Activated CD4-positive, alpha-beta T cell treated with anti-CD3 and anti-CD28 coated beads for 36 hours (primary cell): ENCODE measurements at regions of chr1 and their contacts with region 1.

Region 1: GRCh38 chr1:54052934-54053744 is at the starts of genes TCEANC2 and TMEM59:
- DNase-seq: peak; percentile 98
- ATAC-seq: peak; percentile 96
- H3K4me3 Mint-ChIP-seq: no peak within 1 kb of the TSS
- H3K27ac Mint-ChIP-seq: no peak within 1 kb of the TSS
- H3K4me1 Mint-ChIP-seq: peaks cover 33% of the 10 kb centered on the region
- H3K27me3 Mint-ChIP-seq: no peaks in the 10 kb centered on the region
- total RNA-seq, gene TCEANC2: 14.0 to 14.2 TPM
- total RNA-seq, gene TMEM59: 99.3 to 120 TPM

Region 2: GRCh38 chr1:53196485-53197270 is 856.5 kb before region 1 on chr1 and contains the start of gene CPT2:
- CTCF ChIA-PET with region 1: no interaction called
- POLR2A ChIA-PET with region 1: no interaction called
- intact Hi-C with region 1: loop called in 1 of 2 experiments (anchors 1 kb)
- DNase-seq: peak; percentile 96
- ATAC-seq: peak; percentile 98
- H3K4me3 Mint-ChIP-seq: peak within 1 kb of the TSS; percentile 98
- H3K27ac Mint-ChIP-seq: peak within 1 kb of the TSS; percentile 99
- H3K4me1 Mint-ChIP-seq: peaks cover 25% of the 10 kb centered on the region
- H3K27me3 Mint-ChIP-seq: no peaks in the 10 kb centered on the region
- total RNA-seq, gene CPT2: 20.7 to 23.7 TPM

Region 3: GRCh38 chr1:53889304-53890298 is 163.5 kb before region 1 on chr1 and contains the start of gene YIPF1:
- CTCF ChIA-PET with region 1: no interaction called
- POLR2A ChIA-PET with region 1: interaction called, 3 read pairs
- intact Hi-C with region 1: loop called (anchors 1 to 2 kb)
- DNase-seq: peak; percentile 93
- ATAC-seq: peak; percentile 90
- H3K4me3 Mint-ChIP-seq: peak within 1 kb of the TSS; percentile 96
- H3K27ac Mint-ChIP-seq: peak within 1 kb of the TSS; percentile 94
- H3K4me1 Mint-ChIP-seq: peaks cover 38% of the 10 kb centered on the region
- H3K27me3 Mint-ChIP-seq: no peaks in the 10 kb centered on the region
- total RNA-seq, gene YIPF1: 19.0 to 24.4 TPM

Region 4: DNA sequence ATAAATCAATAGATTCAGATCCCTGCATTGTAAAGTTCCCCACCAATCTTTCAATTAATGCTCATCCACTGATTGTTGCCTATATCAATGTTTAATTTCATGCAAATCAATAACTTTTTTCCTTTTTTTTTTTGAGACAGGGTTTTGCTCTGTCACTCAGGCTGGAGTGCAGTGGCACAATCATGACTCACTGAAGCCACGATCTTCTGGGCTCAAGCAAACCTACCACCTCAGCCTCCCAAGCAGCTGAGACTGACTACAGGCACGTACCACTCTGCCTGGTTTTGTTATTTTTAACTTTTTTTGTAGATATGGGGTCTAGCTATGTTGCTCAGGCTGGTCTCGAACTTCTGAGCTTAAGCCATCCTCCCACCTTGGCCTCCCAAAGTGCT is 133.5 kb before region 1 on chr1:
- CTCF ChIA-PET with region 1: no interaction called
- POLR2A ChIA-PET with region 1: no interaction called
- intact Hi-C with region 1: no loop called
- DNase-seq: peak; percentile 59
- ATAC-seq: peak; percentile 90
- H3K4me3 Mint-ChIP-seq: no peak overlapping the region
- H3K27ac Mint-ChIP-seq: peak overlapping the region; percentile 85
- H3K4me1 Mint-ChIP-seq: peaks cover 28% of the 10 kb centered on the region
- H3K27me3 Mint-ChIP-seq: no peaks in the 10 kb centered on the region

Region 5: DNA sequence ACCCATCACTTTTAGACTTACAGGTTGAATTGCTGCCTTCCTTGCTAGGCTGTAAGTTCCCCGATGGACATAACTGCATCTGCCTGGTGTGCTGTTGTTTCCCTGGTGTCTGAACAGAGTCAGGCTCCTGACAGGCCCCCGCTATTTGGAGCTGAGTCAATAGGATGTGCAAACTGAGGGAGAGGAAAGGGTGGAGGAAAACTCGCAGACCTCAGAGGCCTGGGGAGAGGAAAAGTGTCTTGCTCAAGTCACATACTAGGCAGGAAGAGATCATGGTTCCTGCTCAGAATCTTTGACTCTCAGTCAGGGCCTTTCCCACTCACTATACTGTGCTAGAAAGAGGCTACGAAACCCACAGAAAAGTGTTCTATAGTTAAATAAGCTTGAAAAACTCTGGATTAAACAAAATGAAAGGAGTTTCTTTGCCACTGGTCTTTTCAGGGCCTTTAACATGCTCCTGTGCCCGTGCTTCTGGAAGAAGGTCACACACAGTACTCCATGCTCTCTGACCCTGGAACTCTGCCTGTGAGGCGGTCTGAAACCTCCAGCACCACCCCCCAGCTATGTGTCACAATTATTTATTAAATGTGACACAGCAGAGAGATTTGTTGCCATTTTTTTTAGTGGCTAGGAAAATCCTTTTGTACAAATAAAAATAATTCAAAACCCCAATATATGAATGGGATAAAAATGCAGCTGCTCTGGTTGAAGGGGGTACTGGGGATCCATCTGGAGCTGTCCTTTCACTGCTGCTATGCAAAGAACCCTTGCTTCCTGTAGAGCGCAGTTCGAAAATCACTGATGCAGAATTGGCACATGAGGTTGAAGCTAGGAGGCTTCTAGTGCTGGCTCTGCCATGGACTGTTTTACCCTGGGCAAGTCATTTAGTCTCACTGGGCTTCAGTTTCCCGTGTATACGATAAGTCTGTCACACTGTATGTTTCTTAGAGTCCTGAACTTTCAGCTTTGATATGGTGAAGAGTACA is 119.8 kb after region 1 on chr1:
- CTCF ChIA-PET with region 1: no interaction called
- POLR2A ChIA-PET with region 1: no interaction called
- intact Hi-C with region 1: no loop called
- DNase-seq: no peak
- ATAC-seq: no peak
- H3K4me3 Mint-ChIP-seq: no peak overlapping the region
- H3K27ac Mint-ChIP-seq: no peak overlapping the region
- H3K4me1 Mint-ChIP-seq: peaks cover 9% of the 10 kb centered on the region
- H3K27me3 Mint-ChIP-seq: no peaks in the 10 kb centered on the region

Region 6: DNA sequence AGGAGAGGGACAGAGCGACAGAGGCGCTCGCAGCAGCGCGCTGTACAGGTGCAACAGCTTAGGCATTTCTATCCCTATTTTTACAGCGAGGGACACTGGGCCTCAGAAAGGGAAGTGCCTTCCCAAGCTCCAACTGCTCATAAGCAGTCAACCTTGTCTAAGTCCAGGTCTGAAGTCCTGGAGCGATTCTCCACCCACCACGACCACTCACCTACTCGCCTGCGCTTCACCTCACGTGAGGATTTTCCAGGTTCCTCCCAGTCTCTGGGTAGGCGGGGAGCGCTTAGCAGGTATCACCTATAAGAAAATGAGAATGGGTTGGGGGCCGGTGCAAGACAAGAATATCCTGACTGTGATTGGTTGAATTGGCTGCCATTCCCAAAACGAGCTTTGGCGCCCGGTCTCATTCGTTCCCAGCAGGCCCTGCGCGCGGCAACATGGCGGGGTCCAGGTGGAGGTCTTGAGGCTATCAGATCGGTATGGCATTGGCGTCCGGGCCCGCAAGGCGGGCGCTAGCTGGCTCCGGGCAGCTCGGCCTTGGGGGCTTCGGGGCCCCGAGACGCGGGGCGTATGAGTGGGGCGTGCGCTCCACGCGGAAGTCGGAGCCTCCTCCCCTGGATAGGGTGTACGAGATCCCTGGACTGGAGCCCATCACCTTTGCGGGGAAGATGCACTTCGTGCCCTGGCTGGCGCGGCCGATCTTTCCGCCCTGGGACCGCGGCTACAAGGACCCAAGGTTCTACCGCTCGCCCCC is 146.8 kb after region 1 on chr1 and contains the starts of genes CYB5RL and MRPL37:
- CTCF ChIA-PET with region 1: no interaction called
- POLR2A ChIA-PET with region 1: no interaction called
- intact Hi-C with region 1: loop called (anchors 1 kb)
- DNase-seq: peak; percentile 94
- ATAC-seq: peak; percentile 99
- H3K4me3 Mint-ChIP-seq: peak within 1 kb of the TSS; percentile 83
- H3K27ac Mint-ChIP-seq: peak within 1 kb of the TSS; percentile 84
- H3K4me1 Mint-ChIP-seq: peaks cover 30% of the 10 kb centered on the region
- H3K27me3 Mint-ChIP-seq: no peaks in the 10 kb centered on the region
- total RNA-seq, gene CYB5RL: 13.1 to 13.5 TPM
- total RNA-seq, gene MRPL37: 177 to 189 TPM

Region 7: DNA sequence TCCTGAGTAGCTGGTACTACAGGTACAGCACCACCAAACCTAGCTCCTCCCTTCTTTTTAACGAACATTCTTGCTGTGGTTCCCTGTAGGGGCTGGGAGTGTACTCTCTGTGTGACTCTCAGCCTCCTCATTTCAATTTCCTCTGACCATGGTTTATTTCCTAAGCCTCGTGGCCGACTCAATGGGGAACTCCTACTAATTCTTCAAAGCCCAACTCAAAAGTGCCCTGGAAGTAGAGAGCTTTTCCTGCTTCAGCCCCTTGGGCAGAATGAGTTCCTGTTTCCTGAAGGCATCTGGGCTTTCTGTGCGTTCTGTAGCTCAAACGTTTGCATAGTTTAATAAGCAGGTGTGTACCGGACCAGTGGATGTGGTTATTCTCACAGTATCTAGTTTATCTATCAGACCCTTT is 424.0 kb after region 1 on chr1:
- CTCF ChIA-PET with region 1: no interaction called
- POLR2A ChIA-PET with region 1: no interaction called
- intact Hi-C with region 1: no loop called
- DNase-seq: no peak
- ATAC-seq: peak; percentile 42
- H3K4me3 Mint-ChIP-seq: no peak overlapping the region
- H3K27ac Mint-ChIP-seq: no peak overlapping the region
- H3K4me1 Mint-ChIP-seq: peaks cover 65% of the 10 kb centered on the region
- H3K27me3 Mint-ChIP-seq: peaks cover 8% of the 10 kb centered on the region

Region 8: GRCh38 chr1:54488779-54489626 is 435.9 kb after region 1 on chr1:
- CTCF ChIA-PET with region 1: no interaction called
- POLR2A ChIA-PET with region 1: no interaction called
- intact Hi-C with region 1: loop called (anchors 1 to 5 kb)
- DNase-seq: peak; percentile 82
- ATAC-seq: peak; percentile 71
- H3K4me3 Mint-ChIP-seq: peak overlapping the region; percentile 73
- H3K27ac Mint-ChIP-seq: peak overlapping the region; percentile 69
- H3K4me1 Mint-ChIP-seq: peaks cover 39% of the 10 kb centered on the region
- H3K27me3 Mint-ChIP-seq: peaks cover 6% of the 10 kb centered on the region

Region 9: DNA sequence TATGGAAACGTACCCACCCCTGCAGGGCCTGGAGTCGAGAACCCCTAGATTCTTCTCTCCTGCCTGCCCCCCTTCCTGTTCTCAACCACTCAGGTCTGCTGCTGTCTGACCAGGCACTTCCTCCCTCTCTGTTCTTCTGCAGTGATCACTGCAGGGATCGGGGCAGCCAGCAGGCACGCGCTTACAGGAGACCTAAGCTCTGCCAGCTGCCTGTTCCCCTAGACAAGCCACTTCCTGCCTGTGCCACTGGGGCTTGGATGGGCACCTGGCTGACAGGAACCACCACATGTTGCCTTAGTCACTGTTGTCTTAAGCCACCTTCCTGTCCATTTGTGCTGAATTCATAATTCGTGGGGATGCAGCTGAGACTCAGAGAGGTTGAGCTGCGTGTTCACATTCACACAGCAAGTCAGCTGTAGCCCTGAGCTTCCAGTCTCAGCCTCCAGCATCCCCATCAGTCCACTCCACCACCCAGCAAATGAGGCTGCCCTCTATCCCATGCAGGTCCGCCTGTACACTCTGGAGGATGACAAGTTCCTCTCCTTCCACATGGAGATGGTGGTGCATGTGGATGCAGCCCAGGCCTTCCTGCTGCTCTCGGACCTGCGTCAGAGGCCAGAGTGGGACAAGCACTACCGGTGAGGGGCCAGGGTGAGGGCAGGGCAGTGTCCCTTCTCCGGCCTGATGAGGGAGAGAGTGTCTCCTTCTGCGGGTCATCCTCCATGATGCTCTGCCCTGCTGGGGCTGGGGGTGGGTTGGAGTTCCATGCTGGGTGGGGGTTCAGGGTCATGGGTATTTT is 551.6 kb after region 1 on chr1:
- CTCF ChIA-PET with region 1: no interaction called
- POLR2A ChIA-PET with region 1: no interaction called
- intact Hi-C with region 1: no loop called
- DNase-seq: peak; percentile 51
- ATAC-seq: peak; percentile 86
- H3K4me3 Mint-ChIP-seq: no peak overlapping the region
- H3K27ac Mint-ChIP-seq: no peak overlapping the region
- H3K4me1 Mint-ChIP-seq: peaks cover 14% of the 10 kb centered on the region
- H3K27me3 Mint-ChIP-seq: no peaks in the 10 kb centered on the region

Region 10: GRCh38 chr1:54800899-54801759 is 748.0 kb after region 1 on chr1 and contains the start of gene TTC22:
- CTCF ChIA-PET with region 1: no interaction called
- POLR2A ChIA-PET with region 1: no interaction called
- intact Hi-C with region 1: loop called (anchors 1 to 2 kb)
- DNase-seq: peak; percentile 87
- ATAC-seq: peak; percentile 60
- H3K4me3 Mint-ChIP-seq: peak within 1 kb of the TSS; percentile 77
- H3K27ac Mint-ChIP-seq: peak within 1 kb of the TSS; percentile 86
- H3K4me1 Mint-ChIP-seq: peaks cover 55% of the 10 kb centered on the region
- H3K27me3 Mint-ChIP-seq: no peaks in the 10 kb centered on the region
- total RNA-seq, gene TTC22: 4.1 to 4.2 TPM